Activated T-helper 2 cell treated with anti-CD3 and anti-CD28 coated beads, Interferon-gamma antibody, Interleukin-2, Interleukin-4, amounts not matched to agents 10 μg/mL and 5 μg/mL and 100 μg/mL, durations not matched to agents 14 hours and 24 hours and 36 hours (primary cell): ENCODE measurements at regions of chr5 and their contacts with region 1.

Region 1: GRCh38 chr5:39256477-39257235 is 37.3 kb upstream of the FYB1 start:
- DNase-seq: no peak
- H3K4me3 Mint-ChIP-seq: no peak overlapping the region
- H3K27ac Mint-ChIP-seq: no peak overlapping the region
- H3K4me1 Mint-ChIP-seq: peaks cover 19% of the 10 kb centered on the region
- H3K27me3 Mint-ChIP-seq: no peaks in the 10 kb centered on the region

Region 2: DNA sequence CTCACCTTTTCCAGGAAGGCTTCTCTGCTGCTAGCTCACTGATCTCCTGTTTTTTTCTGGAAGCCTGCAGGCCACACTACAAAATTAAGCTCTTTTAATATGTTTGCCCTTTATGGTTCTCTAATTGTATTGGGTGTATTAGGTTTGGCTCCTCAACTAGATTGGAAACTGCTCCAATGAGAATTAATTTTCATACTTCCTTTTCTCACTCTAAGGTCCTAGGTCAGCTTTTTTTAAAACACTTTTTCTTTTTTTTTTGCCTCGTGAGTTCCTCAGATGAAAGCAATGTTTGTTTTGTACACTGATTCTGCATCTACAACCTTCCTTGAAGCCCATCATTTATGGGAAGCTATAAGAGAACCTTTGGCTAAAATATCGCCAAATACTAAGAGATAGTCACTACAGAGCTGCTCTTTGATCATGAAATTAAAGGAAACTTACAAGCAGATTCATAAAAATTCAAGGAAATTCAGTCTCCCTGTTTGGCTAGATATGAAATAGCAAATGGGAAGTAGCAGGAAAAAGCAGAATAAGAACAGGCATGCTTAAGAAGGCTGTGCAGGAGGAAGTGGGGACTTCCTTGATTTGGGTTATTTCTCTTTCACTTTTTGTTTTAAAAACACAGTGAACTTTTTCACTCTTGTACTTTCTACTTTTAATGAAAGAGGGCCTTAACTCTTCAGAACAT is 17.9 kb after region 1 on chr5:
- intact Hi-C with region 1: loop called (anchors 2 kb)
- DNase-seq: no peak
- H3K4me3 Mint-ChIP-seq: peak overlapping the region; percentile 74
- H3K27ac Mint-ChIP-seq: peak overlapping the region; percentile 95
- H3K4me1 Mint-ChIP-seq: peaks cover 36% of the 10 kb centered on the region
- H3K27me3 Mint-ChIP-seq: no peaks in the 10 kb centered on the region